ENCODE measurements at regions of chr1 and their contacts with region 1.

Region 1: GRCh38 chr1:8848663-8849386 is 29.7 kb downstream of the ENO1 start:
- DNase-seq: peak; percentile 53
- H3K4me3 Mint-ChIP-seq: no peak overlapping the region
- H3K27ac Mint-ChIP-seq: no peak overlapping the region
- H3K4me1 Mint-ChIP-seq: no peaks in the 10 kb centered on the region
- H3K27me3 Mint-ChIP-seq: peaks cover 5% of the 10 kb centered on the region

Region 2: GRCh38 chr1:8396786-8397406 is 451.9 kb before region 1 on chr1:
- intact Hi-C with region 1: loop called (anchors 5 kb)
- DNase-seq: no peak
- H3K4me3 Mint-ChIP-seq: no peak overlapping the region
- H3K27ac Mint-ChIP-seq: peak overlapping the region; percentile 71
- H3K4me1 Mint-ChIP-seq: peaks cover 63% of the 10 kb centered on the region
- H3K27me3 Mint-ChIP-seq: no peaks in the 10 kb centered on the region

Region 3: GRCh38 chr1:8789314-8790214 is 59.3 kb before region 1 on chr1:
- intact Hi-C with region 1: loop called (anchors 10 kb)
- DNase-seq: no peak
- H3K4me3 Mint-ChIP-seq: no peak overlapping the region
- H3K27ac Mint-ChIP-seq: no peak overlapping the region
- H3K4me1 Mint-ChIP-seq: no peaks in the 10 kb centered on the region
- H3K27me3 Mint-ChIP-seq: no peaks in the 10 kb centered on the region

Region 4: GRCh38 chr1:8831340-8831739 is 17.5 kb before region 1 on chr1:
- intact Hi-C with region 1: no loop called
- DNase-seq: no peak
- H3K4me3 Mint-ChIP-seq: no peak overlapping the region
- H3K27ac Mint-ChIP-seq: no peak overlapping the region
- H3K4me1 Mint-ChIP-seq: peaks cover 8% of the 10 kb centered on the region
- H3K27me3 Mint-ChIP-seq: peaks cover 2% of the 10 kb centered on the region

Measured in activated T-helper 1 cell treated with anti-CD3 and anti-CD28 coated beads, Interleukin-12 subunit alpha, Interleukin-12 subunit beta, Interleukin-2, Interleukin-4 antibody, amounts not matched to agents 30 ng/mL and 10 ng/mL and 1 ng/mL, durations not matched to agents 14 hours and 24 hours and 36 hours (primary cell).